MCF 10A (cell line): ENCODE measurements at regions of chr1 and their contacts with region 1.

Region 1: DNA sequence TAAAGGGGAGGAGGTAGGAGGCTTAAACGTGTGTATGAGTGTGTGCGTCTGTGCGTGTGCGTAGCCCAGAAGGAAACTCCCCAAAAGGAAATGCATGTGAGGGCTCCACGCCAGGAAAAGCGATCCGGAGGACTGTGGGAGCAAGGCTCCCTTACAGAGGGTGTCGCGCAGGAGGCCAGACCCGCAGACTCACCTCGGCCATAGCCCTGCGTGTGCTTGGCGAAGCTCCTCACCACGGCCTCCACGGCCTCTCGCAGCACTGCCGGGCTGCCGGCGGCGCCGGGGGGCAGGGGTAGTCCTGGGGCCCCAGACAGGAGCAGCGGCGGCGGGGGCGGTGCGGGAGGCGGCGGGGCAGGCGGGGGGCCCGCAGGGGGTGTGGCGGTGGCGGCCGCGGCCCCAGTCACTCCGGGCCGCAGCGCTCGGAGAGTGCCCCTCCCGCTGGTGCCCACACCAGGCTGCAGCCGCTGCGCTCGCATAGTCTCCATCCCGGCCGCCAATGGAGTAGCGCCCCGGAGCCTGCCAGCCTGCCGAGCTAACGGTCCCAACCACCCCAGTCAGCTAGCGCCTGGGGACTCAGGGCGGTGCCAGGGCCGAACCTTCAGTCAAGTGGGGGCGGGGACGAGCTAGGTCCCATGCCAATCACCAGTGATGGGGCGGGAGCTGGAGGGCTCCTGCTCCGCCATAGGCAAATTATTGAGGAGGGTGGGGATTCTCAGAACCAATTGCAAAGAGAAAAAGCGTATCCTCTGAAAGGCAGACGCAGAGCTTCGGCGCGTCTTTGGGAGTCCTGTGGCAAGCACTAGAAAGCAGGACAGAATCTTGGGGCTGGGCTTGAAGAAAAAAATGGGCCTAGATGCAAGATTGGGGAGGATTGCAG is at the start of gene LIX1L:
- DNase-seq: peak; percentile 100
- H3K4me3 Mint-ChIP-seq: peak within 1 kb of the TSS; percentile 80
- H3K27ac Mint-ChIP-seq: peak within 1 kb of the TSS; percentile 80
- H3K4me1 Mint-ChIP-seq: peaks cover 65% of the 10 kb centered on the region
- H3K27me3 Mint-ChIP-seq: no peaks in the 10 kb centered on the region
- CTCF ChIP-seq: no peak
- total RNA-seq, gene LIX1L: 40.1 and 42.1 TPM in 2 replicates

Region 2: GRCh38 chr1:145701306-145701862 is 256.3 kb before region 1 on chr1:
- CTCF ChIA-PET with region 1: no interaction called
- POLR2A ChIA-PET with region 1: no interaction called
- intact Hi-C with region 1: no loop called
- DNase-seq: no peak
- H3K4me3 Mint-ChIP-seq: no peak overlapping the region
- H3K27ac Mint-ChIP-seq: no peak overlapping the region
- H3K4me1 Mint-ChIP-seq: peaks cover 11% of the 10 kb centered on the region
- H3K27me3 Mint-ChIP-seq: no peaks in the 10 kb centered on the region
- CTCF ChIP-seq: no peak

Region 3: GRCh38 chr1:145823565-145824498 is 133.8 kb before region 1 on chr1 and contains the starts of genes POLR3C and RNF115:
- CTCF ChIA-PET with region 1: no interaction called
- POLR2A ChIA-PET with region 1: interaction called, 27 read pairs
- intact Hi-C with region 1: no loop called
- DNase-seq: peak; percentile 95
- H3K4me3 Mint-ChIP-seq: peak within 1 kb of the TSS; percentile 90
- H3K27ac Mint-ChIP-seq: peak within 1 kb of the TSS; percentile 94
- H3K4me1 Mint-ChIP-seq: peaks cover 6% of the 10 kb centered on the region
- H3K27me3 Mint-ChIP-seq: no peaks in the 10 kb centered on the region
- CTCF ChIP-seq: no peak
- total RNA-seq, gene POLR3C: 67.9 and 96.8 TPM in 2 replicates
- total RNA-seq, gene RNF115: 16.8 and 19.5 TPM in 2 replicates

Region 4: DNA sequence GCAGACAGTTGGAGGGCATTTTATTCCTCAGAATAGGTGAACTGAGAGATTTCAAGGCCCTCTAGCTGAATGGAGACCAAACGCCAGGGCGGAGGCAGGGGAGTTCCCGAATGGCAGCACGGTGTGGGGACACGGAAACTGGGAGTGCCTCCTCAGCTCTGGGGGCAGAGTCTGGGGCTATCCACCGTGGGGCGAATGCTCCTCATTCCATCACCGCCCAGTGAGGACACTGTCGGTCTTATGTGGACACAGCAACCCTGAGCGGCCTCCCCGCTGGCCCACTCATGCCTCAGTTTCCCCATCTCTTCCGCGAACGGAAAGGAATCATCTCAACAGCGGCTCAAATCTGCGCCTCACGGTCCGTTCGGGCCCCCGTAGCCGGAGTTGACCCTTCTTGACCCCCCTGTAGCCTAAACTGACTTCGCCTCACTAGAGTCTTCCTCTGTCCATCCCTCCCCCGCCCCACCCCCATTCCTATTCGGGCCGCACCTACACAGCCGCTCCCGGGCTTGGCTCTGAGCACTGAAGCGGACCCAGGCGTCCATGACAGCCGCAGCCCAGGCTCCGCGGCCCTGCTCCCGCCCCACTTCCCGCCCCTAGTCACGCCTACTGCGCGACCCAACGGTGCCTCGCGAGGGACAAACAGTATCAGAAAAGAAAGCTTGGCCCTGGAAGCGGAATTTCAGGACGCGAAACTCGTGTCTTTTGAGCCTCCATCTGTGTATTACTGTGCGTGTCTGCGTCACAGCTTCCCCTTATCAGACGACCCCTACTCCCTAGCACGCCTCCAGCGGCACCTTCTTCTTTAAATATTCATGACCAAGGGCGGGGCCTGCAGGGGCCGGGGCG is 39.3 kb before region 1 on chr1 and contains the start of gene PEX11B:
- CTCF ChIA-PET with region 1: interaction called, 9 read pairs
- POLR2A ChIA-PET with region 1: interaction called, 57 read pairs
- intact Hi-C with region 1: loop called (anchors 2 kb)
- DNase-seq: peak; percentile 92
- H3K4me3 Mint-ChIP-seq: peak within 1 kb of the TSS; percentile 94
- H3K27ac Mint-ChIP-seq: peak within 1 kb of the TSS; percentile 99
- H3K4me1 Mint-ChIP-seq: peaks cover 43% of the 10 kb centered on the region
- H3K27me3 Mint-ChIP-seq: no peaks in the 10 kb centered on the region
- CTCF ChIP-seq: no peak
- total RNA-seq, gene PEX11B: 35.5 and 36.2 TPM in 2 replicates

Region 5: DNA sequence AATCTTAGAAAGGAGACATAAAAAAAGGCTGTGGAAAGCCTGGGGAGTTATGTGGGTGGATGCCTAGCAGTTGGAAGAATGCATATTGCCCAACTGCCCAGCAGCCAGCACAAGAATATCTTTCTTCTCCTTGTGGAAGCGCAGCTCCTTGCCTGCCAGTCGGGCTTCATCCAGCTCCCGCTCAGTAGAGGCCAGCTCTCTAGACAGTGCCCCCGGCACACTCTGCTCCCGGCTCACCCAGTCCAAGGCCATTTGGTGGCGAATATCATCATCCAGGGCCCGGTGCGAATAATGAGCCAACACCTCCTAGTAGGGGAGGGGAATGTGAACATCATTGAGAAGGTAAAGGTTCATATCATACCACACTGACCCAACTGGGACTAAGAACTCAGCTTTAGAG is 21.4 kb before region 1 on chr1:
- CTCF ChIA-PET with region 1: interaction called, 3 read pairs
- POLR2A ChIA-PET with region 1: interaction called, 24 read pairs
- intact Hi-C with region 1: no loop called
- DNase-seq: no peak
- H3K4me3 Mint-ChIP-seq: no peak overlapping the region
- H3K27ac Mint-ChIP-seq: no peak overlapping the region
- H3K4me1 Mint-ChIP-seq: no peaks in the 10 kb centered on the region
- H3K27me3 Mint-ChIP-seq: no peaks in the 10 kb centered on the region
- CTCF ChIP-seq: no peak

Region 6: GRCh38 chr1:145996433-145997015 is 38.8 kb after region 1 on chr1 and contains the start of gene TXNIP:
- CTCF ChIA-PET with region 1: interaction called, 9 read pairs
- POLR2A ChIA-PET with region 1: interaction called, 226 read pairs
- intact Hi-C with region 1: no loop called
- DNase-seq: peak; percentile 99
- H3K4me3 Mint-ChIP-seq: peak within 1 kb of the TSS; percentile 89
- H3K27ac Mint-ChIP-seq: peak within 1 kb of the TSS; percentile 95
- H3K4me1 Mint-ChIP-seq: peaks cover 51% of the 10 kb centered on the region
- H3K27me3 Mint-ChIP-seq: no peaks in the 10 kb centered on the region
- CTCF ChIP-seq: no peak
- total RNA-seq, gene TXNIP: 576 and 599 TPM in 2 replicates

Region 7: GRCh38 chr1:146036965-146037646 is 79.4 kb after region 1 on chr1:
- CTCF ChIA-PET with region 1: interaction called, 3 read pairs
- POLR2A ChIA-PET with region 1: interaction called, 88 read pairs
- intact Hi-C with region 1: no loop called
- DNase-seq: peak; percentile 95
- H3K4me3 Mint-ChIP-seq: peak overlapping the region; percentile 99
- H3K27ac Mint-ChIP-seq: peak overlapping the region; percentile 98
- H3K4me1 Mint-ChIP-seq: peaks cover 11% of the 10 kb centered on the region
- H3K27me3 Mint-ChIP-seq: no peaks in the 10 kb centered on the region
- CTCF ChIP-seq: no peak